ENCODE measurements at regions of chr7 and their contacts with region 1.

Region 1: GRCh38 chr7:5045558-5046396 is at the start of gene RBAK:
- DNase-seq: peak; percentile 91
- H3K4me3 Mint-ChIP-seq: peak within 1 kb of the TSS; percentile 91
- H3K27ac Mint-ChIP-seq: peak within 1 kb of the TSS; percentile 79
- H3K4me1 Mint-ChIP-seq: peaks cover 5% of the 10 kb centered on the region
- H3K27me3 Mint-ChIP-seq: no peaks in the 10 kb centered on the region
- CTCF ChIP-seq: no peak
- total RNA-seq, gene RBAK: 14.4 and 14.6 TPM in 2 replicates

Region 2: GRCh38 chr7:4973728-4974198 is 72.0 kb before region 1 on chr7:
- CTCF ChIA-PET with region 1: no interaction called
- POLR2A ChIA-PET with region 1: interaction called, 11 read pairs
- intact Hi-C with region 1: no loop called
- DNase-seq: peak; percentile 92
- H3K4me3 Mint-ChIP-seq: peak overlapping the region; percentile 94
- H3K27ac Mint-ChIP-seq: peak overlapping the region; percentile 93
- H3K4me1 Mint-ChIP-seq: no peaks in the 10 kb centered on the region
- H3K27me3 Mint-ChIP-seq: no peaks in the 10 kb centered on the region
- CTCF ChIP-seq: peak; percentile 82